Prostate gland (tissue), 2 donors: ENCODE measurements at regions of chr9 and their contacts with region 1.

Region 1: DNA sequence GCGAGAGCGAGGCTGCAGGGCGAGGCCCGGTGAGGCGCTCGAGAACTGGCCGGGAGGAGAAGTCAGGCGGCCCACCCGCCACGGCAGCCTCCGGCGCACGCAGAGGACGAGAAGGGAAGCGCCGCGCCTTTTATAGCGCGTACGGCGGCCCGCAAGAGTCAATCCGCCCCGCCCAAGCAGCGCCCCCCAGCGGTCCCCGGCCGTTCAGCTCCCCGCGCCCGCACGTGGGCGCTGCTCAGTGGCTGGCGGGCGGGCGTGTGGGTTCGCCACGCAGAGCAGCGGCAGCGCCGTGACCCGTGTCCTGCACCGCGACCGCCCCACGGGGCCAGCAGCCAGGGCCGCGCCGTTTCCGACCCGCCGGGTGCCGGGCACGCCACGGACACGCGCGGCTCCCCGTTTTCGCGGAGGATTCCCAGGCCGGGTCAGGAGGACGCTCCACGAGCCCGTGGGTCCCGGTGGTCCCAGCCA is 14.6 kb downstream of the LCN10 start:
- DNase-seq: peak; percentile 83
- H3K4me3 ChIP-seq: peak overlapping the region; percentile 78 to 84
- H3K27ac ChIP-seq: peak overlapping the region; percentile 62 to 78
- H3K4me1 ChIP-seq: peaks cover 14% of the 10 kb centered on the region
- H3K27me3 ChIP-seq: no peaks in the 10 kb centered on the region
- CTCF ChIP-seq: peak; percentile 94 to 100 (median 98)
- POLR2A ChIP-seq: peak; percentile 94

Region 2: GRCh38 chr9:136679431-136679941 is 48.6 kb before region 1 on chr9:
- intact Hi-C with region 1: no loop called
- DNase-seq: peak; percentile 76
- H3K4me3 ChIP-seq: no peak overlapping the region
- H3K27ac ChIP-seq: peak overlapping the region; percentile 32 to 38
- H3K4me1 ChIP-seq: peaks cover 10% of the 10 kb centered on the region
- H3K27me3 ChIP-seq: no peaks in the 10 kb centered on the region
- CTCF ChIP-seq: no peak
- POLR2A ChIP-seq: no peak

Region 3: DNA sequence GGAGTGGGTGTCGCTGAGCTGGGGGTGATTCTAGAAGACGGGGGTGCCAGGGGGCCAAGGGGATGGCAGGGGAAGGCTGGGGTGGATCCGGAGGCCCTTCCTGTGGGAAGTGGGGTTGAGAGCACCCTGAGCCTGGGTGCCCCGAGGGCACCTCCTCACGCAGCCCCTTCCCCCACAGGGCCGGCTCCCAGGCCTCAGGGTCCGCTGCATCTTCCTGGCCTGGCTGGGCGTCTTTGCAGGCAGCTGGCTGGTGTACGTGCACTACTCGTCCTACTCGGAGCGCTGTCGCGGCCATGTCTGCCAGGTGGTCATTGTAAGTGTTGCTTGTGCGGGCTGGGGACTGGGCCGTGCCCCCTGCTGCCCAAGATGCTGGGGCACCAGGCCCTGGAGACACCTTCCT is 10.7 kb before region 1 on chr9:
- intact Hi-C with region 1: loop called (anchors 2 kb)
- DNase-seq: no peak
- H3K4me3 ChIP-seq: no peak overlapping the region
- H3K27ac ChIP-seq: no peak overlapping the region
- H3K4me1 ChIP-seq: no peaks in the 10 kb centered on the region
- H3K27me3 ChIP-seq: no peaks in the 10 kb centered on the region
- CTCF ChIP-seq: no peak
- POLR2A ChIP-seq: no peak

Region 4: GRCh38 chr9:136790927-136791641 is 63.0 kb after region 1 on chr9 and contains the start of gene TMEM141:
- intact Hi-C with region 1: no loop called
- DNase-seq: peak; percentile 100
- H3K4me3 ChIP-seq: peak within 1 kb of the TSS; percentile 65
- H3K27ac ChIP-seq: peak within 1 kb of the TSS; percentile 99
- H3K4me1 ChIP-seq: peaks cover 9% of the 10 kb centered on the region
- H3K27me3 ChIP-seq: no peaks in the 10 kb centered on the region
- CTCF ChIP-seq: no peak
- POLR2A ChIP-seq: peak; percentile 94
- total RNA-seq, gene TMEM141: 181 to 335 TPM

Region 5: GRCh38 chr9:136849038-136849959 is 121.2 kb after region 1 on chr9 and contains the start of gene PHPT1:
- intact Hi-C with region 1: loop called (anchors 10 kb)
- DNase-seq: peak; percentile 99
- H3K4me3 ChIP-seq: peak within 1 kb of the TSS; percentile 50 to 56
- H3K27ac ChIP-seq: peak within 1 kb of the TSS; percentile 84 to 91
- H3K4me1 ChIP-seq: peaks cover under 1% of the 10 kb centered on the region
- H3K27me3 ChIP-seq: no peaks in the 10 kb centered on the region
- CTCF ChIP-seq: peak in 2 of 4 experiments; percentile 12 to 23
- POLR2A ChIP-seq: peak; percentile 61
- total RNA-seq, gene PHPT1: 139 to 212 TPM